ENCODE measurements at regions of chr20 and their contacts with region 1.

Region 1: DNA sequence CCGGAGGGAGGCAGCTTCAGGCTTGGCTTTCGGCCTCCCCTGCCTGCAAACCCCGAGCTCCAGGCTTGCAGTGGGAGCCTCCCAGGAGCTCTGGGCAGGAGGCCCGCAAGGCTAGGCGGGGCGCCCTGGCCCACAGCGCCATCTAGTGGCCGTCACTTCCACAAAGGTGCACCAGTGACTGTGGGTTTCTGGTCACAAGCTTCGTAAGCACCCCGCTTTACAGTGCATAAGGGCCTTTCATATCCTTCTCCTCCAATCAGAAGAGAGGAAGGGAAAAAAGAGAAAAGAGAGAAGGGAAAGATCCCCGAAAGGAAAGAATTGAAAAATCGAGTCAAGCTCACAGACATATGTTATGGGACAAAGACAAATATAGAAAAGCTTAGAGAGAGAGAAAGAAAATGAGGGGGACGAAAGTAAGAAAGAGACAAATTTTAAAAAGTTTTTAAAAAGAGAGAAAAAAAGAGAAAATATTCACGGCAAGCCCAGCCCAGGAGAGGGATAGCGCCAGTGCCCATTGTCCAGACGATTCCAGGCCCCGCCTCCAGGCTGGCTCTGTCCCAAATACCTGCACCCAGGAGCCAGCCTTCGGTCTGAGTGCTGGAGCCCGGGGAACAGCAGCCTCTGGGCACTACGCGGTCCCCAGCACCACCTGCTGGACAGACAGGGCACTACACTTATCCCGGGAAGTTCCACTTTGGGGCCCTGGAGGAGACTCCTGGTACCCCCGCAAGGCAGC is 207.1 kb downstream of the PREX1 start:
- DNase-seq: peak; percentile 94
- H3K4me3 ChIP-seq: no peak overlapping the region
- H3K27ac ChIP-seq: no peak overlapping the region
- H3K4me1 ChIP-seq: peaks cover 4% of the 10 kb centered on the region
- H3K27me3 ChIP-seq: no peaks in the 10 kb centered on the region
- CTCF ChIP-seq: peak; percentile 84

Region 2: GRCh38 chr20:47663333-47664067 is 957.2 kb before region 1 on chr20:
- intact Hi-C with region 1: loop called (anchors 2 kb)
- DNase-seq: peak; percentile 83
- H3K4me3 ChIP-seq: no peak overlapping the region
- H3K27ac ChIP-seq: no peak overlapping the region
- H3K4me1 ChIP-seq: no peaks in the 10 kb centered on the region
- H3K27me3 ChIP-seq: no peaks in the 10 kb centered on the region
- CTCF ChIP-seq: peak; percentile 99

Region 3: GRCh38 chr20:47677635-47678453 is 942.8 kb before region 1 on chr20:
- intact Hi-C with region 1: loop called (anchors 5 kb)
- DNase-seq: peak; percentile 28
- H3K4me3 ChIP-seq: no peak overlapping the region
- H3K27ac ChIP-seq: no peak overlapping the region
- H3K4me1 ChIP-seq: no peaks in the 10 kb centered on the region
- H3K27me3 ChIP-seq: no peaks in the 10 kb centered on the region
- CTCF ChIP-seq: peak; percentile 62

Region 4: GRCh38 chr20:47725248-47725973 is 895.3 kb before region 1 on chr20:
- intact Hi-C with region 1: loop called (anchors 5 kb)
- DNase-seq: peak; percentile 82
- H3K4me3 ChIP-seq: no peak overlapping the region
- H3K27ac ChIP-seq: no peak overlapping the region
- H3K4me1 ChIP-seq: no peaks in the 10 kb centered on the region
- H3K27me3 ChIP-seq: no peaks in the 10 kb centered on the region
- CTCF ChIP-seq: peak; percentile 97

Region 5: DNA sequence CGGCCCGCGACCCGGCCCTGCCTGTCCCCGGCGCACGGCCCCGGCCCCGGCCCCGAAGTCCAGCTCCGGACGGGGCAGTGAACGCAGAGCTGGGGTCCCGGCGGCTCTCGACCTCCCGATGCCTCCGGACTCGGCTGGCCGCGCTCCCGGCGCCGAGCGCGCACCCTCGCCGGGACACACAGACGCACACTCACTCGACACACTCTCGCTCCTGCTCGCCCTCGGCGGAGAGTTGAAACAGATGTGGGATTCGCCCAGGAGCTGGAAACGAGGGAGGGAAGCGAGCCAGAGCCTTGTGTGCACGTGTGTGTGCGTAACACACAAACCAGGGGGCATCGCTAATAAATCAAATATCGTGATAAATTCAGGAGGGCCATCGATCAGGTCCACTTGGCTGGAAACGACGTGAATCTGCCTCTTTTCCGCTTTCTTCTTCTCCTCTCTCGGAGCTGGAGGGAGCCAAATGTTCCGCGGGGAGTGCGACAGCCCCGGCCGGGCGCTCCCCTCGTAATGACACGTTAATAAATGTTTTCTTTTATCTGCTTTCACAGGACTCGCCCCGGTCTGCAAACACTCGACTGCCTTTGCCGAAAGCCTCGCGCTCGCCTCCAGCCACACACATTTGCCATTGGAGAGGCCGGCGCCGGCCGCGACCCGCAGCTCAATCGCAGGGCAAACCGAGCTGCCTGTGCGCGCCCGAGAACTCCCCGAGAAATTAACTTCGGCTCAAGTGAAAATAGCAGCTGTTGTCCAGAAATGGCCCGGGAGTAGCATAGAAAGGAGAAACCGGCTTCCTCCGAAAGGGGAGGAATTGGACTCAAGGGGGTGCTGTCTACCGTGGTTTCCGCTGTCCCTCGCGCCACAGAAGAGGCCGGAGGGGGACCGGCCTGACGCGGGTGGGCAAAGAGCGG is 834.6 kb before region 1 on chr20:
- intact Hi-C with region 1: loop called (anchors 5 kb)
- DNase-seq: peak; percentile 75
- H3K4me3 ChIP-seq: peak overlapping the region; percentile 57
- H3K27ac ChIP-seq: peak overlapping the region; percentile 82
- H3K4me1 ChIP-seq: no peaks in the 10 kb centered on the region
- H3K27me3 ChIP-seq: no peaks in the 10 kb centered on the region
- CTCF ChIP-seq: peak; percentile 47

Region 6: GRCh38 chr20:48545015-48545718 is 75.5 kb before region 1 on chr20:
- intact Hi-C with region 1: loop called (anchors 5 kb)
- DNase-seq: no peak
- H3K4me3 ChIP-seq: no peak overlapping the region
- H3K27ac ChIP-seq: no peak overlapping the region
- H3K4me1 ChIP-seq: no peaks in the 10 kb centered on the region
- H3K27me3 ChIP-seq: no peaks in the 10 kb centered on the region
- CTCF ChIP-seq: no peak

Region 7: DNA sequence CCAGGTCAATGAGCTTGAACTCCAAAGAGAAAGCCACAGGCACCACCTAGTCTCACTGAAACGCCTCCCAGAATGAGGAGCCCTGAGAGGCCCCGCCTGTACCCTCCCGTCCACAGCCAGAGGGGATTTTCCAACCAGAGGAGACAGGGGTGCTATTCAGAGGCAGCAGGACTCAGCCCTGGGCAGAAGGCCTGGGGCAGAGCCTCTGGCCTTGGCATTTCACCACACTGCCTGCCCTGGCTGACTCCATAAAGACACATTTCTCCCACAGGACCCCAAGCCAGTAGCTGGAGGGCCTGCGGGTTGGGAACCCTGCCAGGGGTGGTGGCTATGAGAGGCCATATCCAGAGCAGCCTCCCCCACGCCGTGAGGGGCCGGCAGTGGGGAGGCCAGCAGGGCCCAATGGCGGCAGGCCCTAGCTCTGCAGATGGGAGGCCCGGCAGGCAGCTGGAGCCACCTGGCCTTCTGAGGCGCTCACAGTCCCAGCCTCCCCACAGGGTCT is 47.8 kb after region 1 on chr20:
- intact Hi-C with region 1: no loop called
- DNase-seq: no peak
- H3K4me3 ChIP-seq: no peak overlapping the region
- H3K27ac ChIP-seq: no peak overlapping the region
- H3K4me1 ChIP-seq: no peaks in the 10 kb centered on the region
- H3K27me3 ChIP-seq: no peaks in the 10 kb centered on the region
- CTCF ChIP-seq: no peak